Activated T-helper 2 cell treated with anti-CD3 and anti-CD28 coated beads, Interferon-gamma antibody, Interleukin-2, Interleukin-4, amounts not matched to agents 10 μg/mL and 5 μg/mL and 100 μg/mL, durations not matched to agents 14 hours and 24 hours and 36 hours (primary cell): ENCODE measurements at regions of chr13 and their contacts with region 1.

Region 1: DNA sequence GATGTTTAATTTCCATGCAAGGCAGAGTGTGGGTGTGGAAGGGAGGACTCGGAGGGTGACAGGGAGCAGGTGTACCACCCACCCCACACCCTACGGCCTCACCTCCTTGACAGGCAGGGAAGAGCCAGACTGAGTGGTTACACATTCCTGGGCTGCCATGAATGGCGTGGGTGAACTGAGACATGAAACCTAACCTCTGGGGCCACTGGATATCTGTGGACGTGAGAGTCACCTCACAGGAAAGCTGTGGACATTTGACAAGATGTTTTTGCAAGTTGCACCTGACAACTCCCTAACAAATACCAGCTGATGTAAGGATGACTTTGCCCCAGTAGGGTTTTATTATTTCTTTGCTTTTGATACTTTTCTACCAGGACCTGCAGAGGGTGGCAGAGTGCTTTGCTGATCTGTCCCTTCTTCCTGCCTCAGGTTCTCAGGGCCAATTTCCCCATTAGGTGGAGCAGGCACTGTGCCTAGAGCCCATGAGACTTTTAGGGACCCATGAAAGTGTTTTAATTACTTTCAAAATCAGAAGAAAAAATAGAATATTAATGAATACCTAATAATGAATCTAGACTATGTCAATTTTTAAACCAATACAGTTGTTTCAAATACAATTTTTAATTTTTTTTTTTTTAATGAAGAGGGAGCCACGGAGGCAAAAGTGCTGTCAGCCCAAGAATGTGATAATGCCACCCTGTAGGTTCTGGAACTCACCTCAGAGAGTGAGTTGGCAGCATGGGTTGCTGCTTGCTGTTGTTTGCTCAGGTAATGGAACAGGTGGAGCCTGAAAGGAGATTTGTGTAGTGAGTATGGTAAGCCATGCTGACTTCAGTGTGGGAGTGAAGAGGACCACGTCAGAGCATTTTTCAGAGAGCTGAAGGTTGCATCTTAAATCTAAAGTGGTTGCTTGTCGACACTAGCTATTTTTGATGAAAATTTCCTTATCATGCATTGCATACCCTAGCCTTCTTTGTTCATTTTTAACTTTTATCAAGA is 58.0 kb upstream of the CYSLTR2 start:
- DNase-seq: peak; percentile 32
- H3K4me3 Mint-ChIP-seq: no peak overlapping the region
- H3K27ac Mint-ChIP-seq: no peak overlapping the region
- H3K4me1 Mint-ChIP-seq: peaks cover 3% of the 10 kb centered on the region
- H3K27me3 Mint-ChIP-seq: peaks cover 5% of the 10 kb centered on the region

Region 2: DNA sequence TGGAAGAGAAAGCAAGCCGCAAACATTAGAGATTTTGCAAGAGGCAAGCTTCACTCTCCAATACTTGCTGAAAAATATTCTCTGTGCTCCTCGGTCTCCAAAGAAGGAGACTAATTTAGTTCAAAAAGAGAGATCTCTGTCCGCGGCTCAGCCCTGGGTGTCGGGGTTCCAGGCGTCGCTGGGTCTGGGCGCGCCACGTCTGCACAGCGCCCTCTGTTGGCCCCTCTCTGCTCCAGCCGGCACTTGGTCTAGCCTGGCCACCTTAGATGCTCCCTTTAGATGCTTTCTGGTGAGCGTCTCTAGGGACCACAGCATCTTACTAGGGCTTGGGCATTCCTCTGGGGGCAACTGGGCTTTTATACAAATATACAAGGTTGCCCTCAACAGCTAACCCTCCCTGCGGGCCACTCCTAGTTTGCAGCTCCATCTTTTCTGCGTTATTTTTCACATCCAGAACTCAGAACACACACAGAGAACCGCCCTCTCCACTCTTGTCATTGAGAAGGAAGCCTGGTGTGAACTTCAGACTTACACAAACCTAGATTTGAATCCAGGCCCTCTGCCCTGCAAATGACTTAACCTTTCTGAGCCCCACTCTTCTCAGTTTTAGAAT is 136.3 kb after region 1 on chr13:
- intact Hi-C with region 1: loop called (anchors 2 kb)
- DNase-seq: peak; percentile 43
- H3K4me3 Mint-ChIP-seq: peak overlapping the region; percentile 65
- H3K27ac Mint-ChIP-seq: no peak overlapping the region
- H3K4me1 Mint-ChIP-seq: peaks cover 6% of the 10 kb centered on the region
- H3K27me3 Mint-ChIP-seq: peaks cover 9% of the 10 kb centered on the region